ENCODE measurements at regions of chr20 and their contacts with region 1.

Region 1: DNA sequence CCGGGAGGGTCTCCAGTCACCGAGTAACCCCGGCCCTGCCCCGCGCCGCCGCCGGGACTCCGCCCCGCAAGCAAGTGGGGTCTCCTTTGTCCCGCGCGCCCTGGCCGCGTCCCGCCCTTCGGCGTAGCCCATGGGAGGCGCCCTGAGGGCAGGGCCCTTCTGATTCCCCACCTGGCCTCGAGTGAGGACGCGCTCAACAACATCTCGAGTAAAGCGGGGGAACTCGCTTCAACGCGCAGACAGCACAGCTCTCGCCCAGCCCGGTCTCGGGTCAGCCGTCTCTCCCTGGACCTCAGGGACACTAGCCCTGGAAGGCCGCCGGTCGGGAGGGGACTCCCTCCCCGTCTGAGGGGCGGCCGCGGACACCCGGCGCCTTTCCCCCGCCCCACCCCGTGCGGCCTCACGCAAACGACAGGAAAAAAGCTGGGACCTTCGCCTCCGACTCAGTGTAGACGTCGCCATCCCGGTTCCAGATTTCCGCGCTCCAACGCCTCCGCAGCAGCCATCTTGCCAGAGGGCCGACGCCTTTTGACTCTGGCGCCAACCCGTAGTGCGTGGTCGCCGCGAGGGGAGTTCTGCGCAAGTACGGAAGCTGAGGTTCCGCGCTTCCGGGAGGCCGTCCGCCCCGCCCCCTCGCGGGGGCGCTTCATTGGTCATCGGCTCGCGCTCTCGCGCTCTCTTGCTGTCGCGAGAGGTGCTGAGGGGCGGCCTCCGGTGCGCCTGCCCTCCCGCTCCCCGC is 412 bp upstream of the GID8 start:
- DNase-seq: peak; percentile 99 to 100
- H3K4me3 ChIP-seq: peak overlapping the region; percentile 81
- H3K4me3 Mint-ChIP-seq: no peak overlapping the region
- H3K27ac Mint-ChIP-seq: peak overlapping the region; percentile 95
- H3K4me1 ChIP-seq: peaks cover 26% of the 10 kb centered on the region
- H3K4me1 Mint-ChIP-seq: peaks cover 8% of the 10 kb centered on the region
- H3K27me3 ChIP-seq: no peaks in the 10 kb centered on the region
- H3K27me3 Mint-ChIP-seq: no peaks in the 10 kb centered on the region
- CTCF ChIP-seq: no peak

Region 2: GRCh38 chr20:62285722-62286121 is 651.8 kb before region 1 on chr20:
- CTCF ChIA-PET with region 1: no interaction called
- POLR2A ChIA-PET with region 1: no interaction called
- intact Hi-C with region 1: no loop called
- DNase-seq: no peak
- H3K4me3 ChIP-seq: no peak overlapping the region
- H3K4me3 Mint-ChIP-seq: no peak overlapping the region
- H3K27ac Mint-ChIP-seq: no peak overlapping the region
- H3K4me1 ChIP-seq: no peaks in the 10 kb centered on the region
- H3K4me1 Mint-ChIP-seq: no peaks in the 10 kb centered on the region
- H3K27me3 ChIP-seq: no peaks in the 10 kb centered on the region
- H3K27me3 Mint-ChIP-seq: no peaks in the 10 kb centered on the region
- CTCF ChIP-seq: no peak

Region 3: DNA sequence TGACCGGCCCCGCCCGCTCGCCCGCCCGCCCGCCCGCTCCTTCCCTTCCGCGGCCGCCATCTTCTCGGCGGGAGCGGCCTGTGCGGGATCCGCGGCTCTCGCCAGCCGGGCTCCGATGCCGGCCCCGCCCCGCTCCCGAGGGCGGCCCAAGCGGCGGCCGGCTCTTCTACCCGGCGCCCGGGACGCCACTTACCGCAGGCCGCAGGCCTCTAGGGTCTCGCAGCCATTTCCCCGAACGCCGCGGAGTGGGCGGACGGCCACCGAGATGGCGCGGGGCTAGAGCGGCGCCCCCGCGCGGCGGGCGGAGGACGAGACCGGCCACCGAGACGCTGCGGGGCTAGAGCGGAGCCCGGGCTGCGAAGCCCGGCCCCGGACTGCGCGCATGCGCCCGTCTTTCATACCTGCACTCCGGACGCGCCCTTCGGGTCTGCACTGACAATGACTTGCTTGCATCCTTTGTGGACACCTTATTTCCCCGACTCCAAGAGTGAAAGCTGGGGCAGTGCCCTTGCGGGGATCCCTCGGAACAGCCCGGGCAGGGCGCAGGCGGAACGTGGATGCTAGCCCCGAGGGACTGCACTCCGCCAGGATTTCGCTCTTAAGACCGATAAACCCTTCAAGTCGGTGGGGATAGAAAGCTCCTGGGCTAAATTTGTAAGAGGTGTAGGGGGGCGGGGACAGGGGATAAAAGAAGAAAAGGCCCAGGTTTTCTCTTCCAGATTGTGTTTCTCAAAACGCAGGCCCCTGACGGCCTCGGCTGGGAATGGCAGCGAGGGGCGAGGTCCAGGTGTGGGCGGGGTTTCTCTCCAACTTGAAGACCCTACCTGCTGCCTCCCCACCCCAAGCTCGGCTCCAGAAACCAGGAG is 11.1 kb before region 1 on chr20 and contains the start of gene DIDO1:
- CTCF ChIA-PET with region 1: interaction called, 6 read pairs
- POLR2A ChIA-PET with region 1: interaction called, 19 read pairs
- intact Hi-C with region 1: loop called (anchors 1 kb)
- DNase-seq: peak; percentile 96 to 99
- H3K4me3 ChIP-seq: peak within 1 kb of the TSS; percentile 99
- H3K4me3 Mint-ChIP-seq: peak within 1 kb of the TSS; percentile 93
- H3K27ac Mint-ChIP-seq: peak within 1 kb of the TSS; percentile 95
- H3K4me1 ChIP-seq: peaks cover 31% of the 10 kb centered on the region
- H3K4me1 Mint-ChIP-seq: peaks cover 37% of the 10 kb centered on the region
- H3K27me3 ChIP-seq: no peaks in the 10 kb centered on the region
- H3K27me3 Mint-ChIP-seq: no peaks in the 10 kb centered on the region
- CTCF ChIP-seq: peak; percentile 69 to 93
- total RNA-seq, gene DIDO1: 120 and 122 TPM in 2 replicates